T-cell (primary cell): ENCODE measurements at regions of chr16 and their contacts with region 1.

Region 1: GRCh38 chr16:66954097-66954659 is 6.9 kb upstream of the CES3 start:
- DNase-seq: peak; percentile 24 to 82 (median 66)
- ATAC-seq: peak; percentile 81 to 95 (median 86)
- H3K4me3 ChIP-seq: no peak overlapping the region
- H3K4me3 Mint-ChIP-seq: no peak overlapping the region
- H3K27ac ChIP-seq: no peak overlapping the region
- H3K27ac Mint-ChIP-seq: peak overlapping the region in 1 of 2 donors; percentile 77
- H3K4me1 ChIP-seq: peaks cover 0 to 3% of the 10 kb centered on the region in 2 experiments
- H3K4me1 Mint-ChIP-seq: peaks cover 7 to 11% (median 11%) of the 10 kb centered on the region in 3 donors
- H3K27me3 ChIP-seq: peaks cover 7 to 37% of the 10 kb centered on the region in 2 experiments
- H3K27me3 Mint-ChIP-seq: peaks cover 30 to 36% of the 10 kb centered on the region in 2 donors

Region 2: GRCh38 chr16:67053767-67054334 is 99.7 kb after region 1 on chr16:
- CTCF ChIA-PET with region 1: interaction called in 1 of 2 experiments, 13 read pairs
- POLR2A ChIA-PET with region 1: no interaction called
- DNase-seq: peak in 1 of 35 experiments; percentile 37
- ATAC-seq: peak; percentile 17 to 49 (median 32)
- H3K4me3 ChIP-seq: peak overlapping the region; percentile 8 to 35
- H3K4me3 Mint-ChIP-seq: peak overlapping the region; percentile 73 to 78 (median 75)
- H3K27ac ChIP-seq: peak overlapping the region; percentile 56
- H3K27ac Mint-ChIP-seq: peak overlapping the region; percentile 95
- H3K4me1 ChIP-seq: peaks cover 16 to 25% of the 10 kb centered on the region in 2 experiments
- H3K4me1 Mint-ChIP-seq: peaks cover 49 to 59% (median 50%) of the 10 kb centered on the region in 3 donors
- H3K27me3 ChIP-seq: no peaks in the 10 kb centered on the region
- H3K27me3 Mint-ChIP-seq: no peaks in the 10 kb centered on the region

Region 3: GRCh38 chr16:67109407-67110135 is 155.4 kb after region 1 on chr16 and contains the start of gene PHAF1:
- CTCF ChIA-PET with region 1: no interaction called
- POLR2A ChIA-PET with region 1: no interaction called
- DNase-seq: peak; percentile 85 to 97 (median 92)
- ATAC-seq: peak; percentile 90 to 91 (median 90)
- H3K4me3 ChIP-seq: peak within 1 kb of the TSS; percentile 92 to 99
- H3K4me3 Mint-ChIP-seq: peak within 1 kb of the TSS; percentile 85 to 94 (median 94)
- H3K27ac ChIP-seq: peak within 1 kb of the TSS; percentile 34
- H3K27ac Mint-ChIP-seq: peak within 1 kb of the TSS; percentile 85 to 88
- H3K4me1 ChIP-seq: peaks cover 10 to 24% of the 10 kb centered on the region in 2 experiments
- H3K4me1 Mint-ChIP-seq: peaks cover 28 to 40% (median 31%) of the 10 kb centered on the region in 3 donors
- H3K27me3 ChIP-seq: peaks cover 0 to 3% of the 10 kb centered on the region in 2 experiments
- H3K27me3 Mint-ChIP-seq: no peaks in the 10 kb centered on the region
- total RNA-seq, gene PHAF1: 19.4 to 23.0 (median 20.1) TPM

Region 4: DNA sequence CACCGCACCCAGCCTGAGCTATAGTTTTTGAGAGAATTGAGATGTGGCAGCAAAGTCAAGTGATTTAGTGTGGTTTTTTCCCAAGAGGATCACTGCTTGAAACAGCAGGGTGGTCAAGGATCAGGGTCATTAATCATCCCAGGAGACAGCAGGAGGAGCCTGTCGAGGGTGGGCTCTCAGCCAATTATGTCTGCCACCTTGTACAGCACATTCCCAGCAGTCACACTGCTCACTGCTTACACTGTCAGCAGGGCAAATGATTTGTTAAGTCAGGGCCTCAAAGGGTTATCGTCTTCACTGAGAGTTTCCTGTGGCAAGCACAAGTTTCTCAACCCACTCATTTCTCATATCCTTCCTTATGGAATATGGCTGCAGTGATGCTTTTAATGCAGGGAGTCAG is 183.4 kb after region 1 on chr16:
- CTCF ChIA-PET with region 1: no interaction called
- POLR2A ChIA-PET with region 1: interaction called in 1 of 2 experiments, 10 read pairs
- DNase-seq: no peak
- ATAC-seq: no peak
- H3K4me3 ChIP-seq: no peak overlapping the region
- H3K4me3 Mint-ChIP-seq: no peak overlapping the region
- H3K27ac ChIP-seq: no peak overlapping the region
- H3K27ac Mint-ChIP-seq: no peak overlapping the region
- H3K4me1 ChIP-seq: no peaks in the 10 kb centered on the region
- H3K4me1 Mint-ChIP-seq: no peaks in the 10 kb centered on the region
- H3K27me3 ChIP-seq: peaks cover 0 to 2% of the 10 kb centered on the region in 2 experiments
- H3K27me3 Mint-ChIP-seq: no peaks in the 10 kb centered on the region

Region 5: GRCh38 chr16:67183627-67184328 is 229.6 kb after region 1 on chr16 and contains the start of gene MATCAP1:
- CTCF ChIA-PET with region 1: interaction called in 1 of 2 experiments, 3 read pairs
- POLR2A ChIA-PET with region 1: interaction called in 1 of 2 experiments, 10 read pairs
- DNase-seq: peak; percentile 83 to 97 (median 94)
- ATAC-seq: peak; percentile 92 to 95 (median 92)
- H3K4me3 ChIP-seq: peak within 1 kb of the TSS; percentile 76 to 80
- H3K4me3 Mint-ChIP-seq: peak within 1 kb of the TSS in 1 of 3 donors; percentile 82
- H3K27ac ChIP-seq: peak within 1 kb of the TSS; percentile 84
- H3K27ac Mint-ChIP-seq: no peak within 1 kb of the TSS
- H3K4me1 ChIP-seq: peaks cover 4 to 27% of the 10 kb centered on the region in 2 experiments
- H3K4me1 Mint-ChIP-seq: peaks cover 14 to 18% (median 16%) of the 10 kb centered on the region in 3 donors
- H3K27me3 ChIP-seq: peaks cover 0 to 43% of the 10 kb centered on the region in 2 experiments
- H3K27me3 Mint-ChIP-seq: peaks cover 2 to 8% of the 10 kb centered on the region in 2 donors
- total RNA-seq, gene MATCAP1: 11.3 to 16.5 (median 14.8) TPM